Activated CD4-positive, alpha-beta memory T cell treated with anti-CD3 and anti-CD28 coated beads, Interleukin-2, amount 10 ng/mL, durations not matched to agents 7 days and 5 days (primary cell): ENCODE measurements at regions of chr9 and their contacts with region 1.

Region 1: DNA sequence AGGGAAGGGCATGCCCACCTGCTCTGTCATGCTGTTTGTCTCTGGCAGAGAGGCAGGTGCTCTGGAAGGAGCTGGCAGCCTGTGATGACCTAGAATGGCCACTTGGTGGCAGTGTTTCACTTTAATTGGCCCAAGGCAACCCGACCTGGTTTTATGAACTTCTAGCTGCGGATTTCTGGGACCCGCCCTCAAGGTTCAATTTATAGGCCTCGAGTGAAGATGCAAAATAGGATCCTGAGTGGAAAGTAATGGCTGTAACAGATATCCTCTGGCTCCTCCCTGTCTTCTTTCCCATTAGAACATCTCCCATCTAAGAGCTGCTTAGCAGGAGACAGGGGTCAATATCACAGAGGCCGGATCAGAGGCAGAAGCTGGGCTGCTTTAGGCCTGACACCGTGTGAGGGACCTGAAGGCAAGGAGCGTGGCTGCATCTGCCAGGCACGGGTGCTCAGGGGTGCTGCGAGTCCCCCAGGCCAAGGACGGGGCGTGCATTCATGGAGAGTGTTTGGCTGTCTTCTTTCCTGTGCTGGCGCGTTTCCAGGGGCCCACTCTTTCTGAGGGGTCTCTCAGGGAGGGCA is 56.7 kb upstream of the SLC28A3 start:
- DNase-seq: peak; percentile 67
- H3K4me3 Mint-ChIP-seq: no peak overlapping the region
- H3K27ac Mint-ChIP-seq: no peak overlapping the region
- H3K4me1 Mint-ChIP-seq: no peaks in the 10 kb centered on the region
- H3K27me3 Mint-ChIP-seq: peaks cover 4% of the 10 kb centered on the region

Region 2: GRCh38 chr9:85425153-85425611 is 1027.9 kb after region 1 on chr9:
- CTCF ChIA-PET with region 1: interaction called, 12 read pairs
- POLR2A ChIA-PET with region 1: no interaction called
- DNase-seq: peak; percentile 53
- H3K4me3 Mint-ChIP-seq: no peak overlapping the region
- H3K27ac Mint-ChIP-seq: no peak overlapping the region
- H3K4me1 Mint-ChIP-seq: peaks cover 4% of the 10 kb centered on the region
- H3K27me3 Mint-ChIP-seq: peaks cover 6% of the 10 kb centered on the region